ENCODE measurements at regions of chr2 and their contacts with region 1.

Region 1: DNA sequence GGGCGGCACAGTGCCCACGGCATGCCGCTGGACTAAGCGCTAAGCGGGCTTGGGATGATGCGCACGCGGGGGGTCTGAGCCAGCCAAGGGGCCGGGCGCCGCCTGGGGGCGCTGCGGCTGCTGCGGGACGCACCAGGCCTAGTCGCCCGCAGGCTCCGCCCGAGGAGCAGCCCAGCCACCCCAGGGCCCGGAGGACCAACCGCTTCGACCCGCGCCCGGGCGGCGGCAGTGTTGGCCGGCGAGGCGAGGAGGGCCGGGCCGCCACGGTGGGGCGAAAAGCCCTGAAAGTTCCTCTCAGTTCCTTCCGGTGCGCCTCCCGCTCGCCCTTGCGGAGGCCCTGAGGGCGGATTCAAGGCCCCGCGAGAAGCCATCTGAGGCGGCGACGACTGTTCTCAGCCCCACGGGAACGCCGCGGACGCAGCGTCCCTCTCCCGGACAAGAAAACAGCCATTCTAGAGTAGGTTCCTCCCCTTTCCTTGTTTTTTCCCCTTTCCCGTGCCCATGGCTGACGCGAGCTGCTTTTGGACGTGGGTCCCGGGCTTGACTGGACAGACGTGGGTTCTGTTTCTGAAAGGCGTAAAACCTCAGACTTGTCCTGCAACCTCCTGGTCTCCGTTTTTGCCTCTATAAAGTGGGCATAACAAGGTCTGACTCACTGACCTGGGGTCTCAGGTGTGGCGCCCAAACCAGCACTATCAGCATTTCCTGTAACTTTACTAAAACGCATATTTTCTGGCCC is at the start of gene ANKAR:
- DNase-seq: peak; percentile 40 to 95
- H3K4me3 ChIP-seq: peak within 1 kb of the TSS; percentile 71 to 79
- H3K27ac ChIP-seq: peak within 1 kb of the TSS; percentile 95 to 98
- H3K4me1 ChIP-seq: peaks cover 0 to 12% of the 10 kb centered on the region in 2 donors
- H3K27me3 ChIP-seq: no peaks in the 10 kb centered on the region
- CTCF ChIP-seq: peak; percentile 79 to 92 (median 83)
- total RNA-seq, gene ANKAR: 0.75 TPM

Region 2: GRCh38 chr2:189654641-189655040 is 19.9 kb before region 1 on chr2:
- intact Hi-C with region 1: no loop called
- DNase-seq: no peak
- H3K4me3 ChIP-seq: no peak overlapping the region
- H3K27ac ChIP-seq: no peak overlapping the region
- H3K4me1 ChIP-seq: peaks cover 4 to 12% of the 10 kb centered on the region in 2 donors
- H3K27me3 ChIP-seq: no peaks in the 10 kb centered on the region
- CTCF ChIP-seq: no peak

Region 3: GRCh38 chr2:189698020-189698887 is 23.7 kb after region 1 on chr2:
- intact Hi-C with region 1: loop called (anchors 1 kb)
- DNase-seq: peak in 1 of 2 donors; percentile 70
- H3K4me3 ChIP-seq: peak overlapping the region in 1 of 2 donors; percentile 17
- H3K27ac ChIP-seq: no peak overlapping the region
- H3K4me1 ChIP-seq: no peaks in the 10 kb centered on the region
- H3K27me3 ChIP-seq: no peaks in the 10 kb centered on the region
- CTCF ChIP-seq: peak; percentile 51 to 74 (median 61)

Region 4: GRCh38 chr2:189762551-189763298 is 88.2 kb after region 1 on chr2 and contains the start of gene OSGEPL1:
- intact Hi-C with region 1: loop called (anchors 5 kb)
- DNase-seq: peak; percentile 68 to 95
- H3K4me3 ChIP-seq: peak within 1 kb of the TSS; percentile 71 to 96
- H3K27ac ChIP-seq: peak within 1 kb of the TSS; percentile 77 to 79
- H3K4me1 ChIP-seq: peaks cover 6 to 13% of the 10 kb centered on the region in 2 donors
- H3K27me3 ChIP-seq: no peaks in the 10 kb centered on the region
- CTCF ChIP-seq: peak; percentile 16 to 48 (median 40)
- total RNA-seq, gene OSGEPL1: not detected

Measured in ascending aorta (tissue), 2 donors.